Esophagus muscularis mucosa (tissue), 4 donors: ENCODE measurements at regions of chr3 and their contacts with region 1.

Region 1: DNA sequence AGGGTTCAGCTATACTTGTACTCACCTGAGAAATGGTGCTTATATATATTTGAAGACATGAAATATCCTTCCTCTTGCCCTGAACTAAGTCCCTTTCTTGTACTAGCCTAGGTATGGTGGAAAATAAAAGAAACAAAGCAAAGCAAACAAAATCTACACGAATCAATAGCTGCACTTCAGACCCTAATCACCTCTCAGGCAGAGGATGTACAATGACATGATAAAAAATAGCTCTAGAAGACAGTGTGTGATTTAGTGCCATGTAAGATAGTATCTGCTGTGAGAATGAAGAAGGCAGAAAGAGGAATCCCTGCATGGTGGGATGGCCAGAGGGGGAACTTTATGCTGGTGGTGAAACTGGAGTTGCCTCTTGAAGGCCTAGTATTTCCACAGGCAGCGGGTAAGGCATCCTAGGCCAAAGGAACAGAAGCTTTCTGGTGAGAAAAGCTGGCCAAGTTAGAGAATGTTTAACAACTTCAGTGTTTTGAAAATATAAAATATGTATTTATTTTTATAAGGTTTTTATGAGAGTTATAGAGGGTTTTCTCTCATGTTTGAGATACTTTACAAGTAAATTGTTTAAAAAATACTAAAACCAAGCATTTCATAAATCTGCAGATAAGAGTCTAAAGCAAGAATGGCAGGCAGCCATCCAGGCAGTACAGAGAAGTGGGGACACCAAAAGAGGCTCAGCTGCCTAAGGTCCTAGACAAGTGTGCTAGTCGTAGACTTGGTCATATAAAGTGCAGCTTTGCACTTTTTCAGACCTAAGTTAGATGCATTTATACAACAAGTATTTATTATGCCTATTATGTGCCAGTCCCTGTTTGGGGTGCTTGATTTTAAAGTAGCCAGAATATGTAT is 14.9 kb downstream of the LEKR1 start:
- DNase-seq: no peak
- H3K4me3 ChIP-seq: no peak overlapping the region
- H3K27ac ChIP-seq: no peak overlapping the region
- H3K4me1 ChIP-seq: no peaks in the 10 kb centered on the region
- H3K27me3 ChIP-seq: no peaks in the 10 kb centered on the region
- CTCF ChIP-seq: no peak
- EP300 ChIP-seq: no peak
- POLR2A ChIP-seq: no peak

Region 2: DNA sequence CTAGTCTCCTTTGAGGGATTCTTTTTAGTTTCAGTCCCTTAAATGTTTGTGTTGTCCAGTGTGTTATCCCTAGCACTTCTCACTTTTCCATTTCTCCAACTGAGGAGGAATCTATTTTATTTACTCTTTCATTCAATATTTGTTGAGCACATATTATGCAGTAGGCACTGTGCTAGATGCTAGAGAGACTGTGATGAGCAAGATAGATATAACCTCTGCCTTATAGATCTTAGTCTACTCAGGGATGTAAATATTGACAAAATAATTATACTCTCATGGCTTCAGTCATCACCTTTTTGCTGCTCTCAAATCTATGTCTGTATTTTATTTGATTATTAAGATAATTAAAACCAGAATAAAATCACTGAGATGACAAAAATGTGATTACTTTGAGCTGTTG is 85.5 kb after region 1 on chr3:
- intact Hi-C with region 1: no loop called
- DNase-seq: no peak
- H3K4me3 ChIP-seq: no peak overlapping the region
- H3K27ac ChIP-seq: no peak overlapping the region
- H3K4me1 ChIP-seq: no peaks in the 10 kb centered on the region
- H3K27me3 ChIP-seq: no peaks in the 10 kb centered on the region
- CTCF ChIP-seq: no peak
- EP300 ChIP-seq: no peak
- POLR2A ChIP-seq: no peak

Region 3: GRCh38 chr3:156939315-156939714 is 98.3 kb after region 1 on chr3:
- intact Hi-C with region 1: no loop called
- DNase-seq: no peak
- H3K4me3 ChIP-seq: no peak overlapping the region
- H3K27ac ChIP-seq: no peak overlapping the region
- H3K4me1 ChIP-seq: no peaks in the 10 kb centered on the region
- H3K27me3 ChIP-seq: no peaks in the 10 kb centered on the region
- CTCF ChIP-seq: no peak
- EP300 ChIP-seq: no peak
- POLR2A ChIP-seq: no peak

Region 4: GRCh38 chr3:156964577-156964976 is 123.5 kb after region 1 on chr3:
- intact Hi-C with region 1: no loop called
- DNase-seq: no peak
- H3K4me3 ChIP-seq: no peak overlapping the region
- H3K27ac ChIP-seq: no peak overlapping the region
- H3K4me1 ChIP-seq: no peaks in the 10 kb centered on the region
- H3K27me3 ChIP-seq: no peaks in the 10 kb centered on the region
- CTCF ChIP-seq: no peak
- EP300 ChIP-seq: no peak
- POLR2A ChIP-seq: no peak

Region 5: GRCh38 chr3:157001221-157001957 is 160.3 kb after region 1 on chr3:
- intact Hi-C with region 1: loop called (anchors 2 kb)
- DNase-seq: no peak
- H3K4me3 ChIP-seq: no peak overlapping the region
- H3K27ac ChIP-seq: no peak overlapping the region
- H3K4me1 ChIP-seq: no peaks in the 10 kb centered on the region
- H3K27me3 ChIP-seq: no peaks in the 10 kb centered on the region
- CTCF ChIP-seq: no peak
- EP300 ChIP-seq: no peak
- POLR2A ChIP-seq: no peak

Region 6: DNA sequence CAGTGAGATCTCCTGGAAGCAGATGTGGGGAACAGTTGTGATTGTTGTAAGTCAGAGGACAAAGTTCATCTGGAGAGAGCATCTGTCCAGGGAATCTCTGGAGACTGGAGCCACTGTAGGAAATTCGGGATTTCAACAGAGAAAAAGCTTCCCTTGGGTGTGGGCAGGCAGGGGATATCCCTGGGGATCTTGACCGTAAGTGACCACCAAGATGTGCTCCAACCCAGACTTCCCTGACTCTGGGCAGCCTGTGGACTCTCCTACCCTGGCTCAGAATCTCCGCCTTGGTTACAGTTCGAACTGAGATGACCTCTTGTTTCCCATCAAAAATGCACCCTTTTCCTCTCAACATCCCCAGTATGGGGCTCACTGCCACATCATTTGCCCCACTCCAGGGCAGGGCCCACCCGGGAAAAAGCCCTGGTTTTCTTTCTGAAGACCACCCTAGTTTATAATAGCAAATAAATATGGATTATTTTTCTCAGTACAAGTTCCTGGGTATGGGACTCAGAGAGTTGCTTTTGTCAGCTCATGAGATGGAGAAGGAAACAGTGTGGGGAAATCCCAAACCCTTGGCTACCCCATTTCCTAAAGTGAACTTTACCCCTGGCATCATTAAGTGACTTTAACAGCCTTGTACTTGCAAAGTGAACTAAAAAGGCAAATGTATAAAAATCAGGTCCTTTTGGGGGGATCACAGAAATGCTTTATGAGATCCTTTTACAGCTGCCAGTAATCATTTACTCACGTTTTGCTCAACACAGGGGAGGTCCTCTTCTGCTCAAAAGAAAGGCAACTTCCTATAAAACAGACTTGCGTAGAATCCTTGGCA is 229.0 kb after region 1 on chr3:
- intact Hi-C with region 1: loop called (anchors 2 kb)
- DNase-seq: peak; percentile 66
- H3K4me3 ChIP-seq: no peak overlapping the region
- H3K27ac ChIP-seq: no peak overlapping the region
- H3K4me1 ChIP-seq: peaks cover 0 to 14% (median 3%) of the 10 kb centered on the region in 4 donors
- H3K27me3 ChIP-seq: no peaks in the 10 kb centered on the region
- CTCF ChIP-seq: no peak
- EP300 ChIP-seq: no peak
- POLR2A ChIP-seq: no peak